Left colon (tissue), 2 donors: ENCODE measurements at regions of chr14 and their contacts with region 1.

Region 1: DNA sequence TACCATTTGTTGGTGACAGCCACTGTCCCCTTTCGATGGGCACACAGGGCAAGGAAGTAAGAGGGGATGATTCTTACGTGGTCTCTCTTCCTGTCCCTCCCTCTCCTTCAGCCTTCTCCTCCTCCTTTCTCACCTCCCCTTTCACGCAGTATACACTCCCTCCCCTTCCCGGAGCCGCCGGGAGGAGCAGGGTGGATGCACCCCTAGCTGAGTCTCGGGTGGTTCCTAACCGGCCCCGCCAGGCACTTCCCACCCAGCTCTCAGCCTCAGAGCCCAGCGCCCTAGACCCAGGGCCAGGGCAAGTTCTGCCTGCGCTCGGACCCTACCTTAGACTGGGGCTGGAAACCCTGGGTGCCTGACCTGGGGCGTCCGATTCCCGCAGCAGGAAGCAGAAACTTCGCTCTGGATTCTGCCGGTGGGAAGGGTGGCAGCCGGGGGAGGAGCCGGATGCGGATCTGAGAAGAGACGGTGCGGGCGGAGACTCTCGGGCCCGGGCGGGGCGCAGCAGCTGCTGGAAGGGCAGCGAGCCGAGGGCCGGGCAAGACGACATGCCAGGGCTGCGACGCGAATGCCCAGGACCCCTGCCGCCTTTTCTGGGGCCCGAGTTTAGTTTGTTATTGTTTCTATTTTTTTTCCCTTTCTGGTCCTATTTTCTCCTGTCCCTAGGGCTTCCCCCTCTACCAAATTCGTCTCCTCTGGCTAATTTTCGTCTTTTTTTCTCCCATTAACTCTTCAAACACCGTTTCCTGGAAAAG is at the start of gene TEP1:
- DNase-seq: peak; percentile 92 to 95
- ATAC-seq: peak; percentile 76
- total RNA-seq, gene TEP1: 72.1 to 74.3 TPM

Region 2: GRCh38 chr14:20461274-20462001 is 48.2 kb after region 1 on chr14 and contains the start of gene PIP4P1:
- intact Hi-C with region 1: loop called in 1 of 2 experiments (anchors 10 kb)
- DNase-seq: peak; percentile 99 to 100
- ATAC-seq: peak; percentile 87
- total RNA-seq, gene PIP4P1: 42.0 to 42.9 TPM

Region 3: GRCh38 chr14:20682435-20683124 is 269.4 kb after region 1 on chr14:
- intact Hi-C with region 1: loop called (anchors 10 kb)
- DNase-seq: peak; percentile 88 to 91
- ATAC-seq: peak; percentile 54